Dendritic cell treated with granulocyte-macrophage colony-stimulating factor and Interleukin-4, amounts not matched to agents 40 ng/mL and 50 ng/mL, for 4 days (primary cell): ENCODE measurements at regions of chr2 and their contacts with region 1.

Region 1: DNA sequence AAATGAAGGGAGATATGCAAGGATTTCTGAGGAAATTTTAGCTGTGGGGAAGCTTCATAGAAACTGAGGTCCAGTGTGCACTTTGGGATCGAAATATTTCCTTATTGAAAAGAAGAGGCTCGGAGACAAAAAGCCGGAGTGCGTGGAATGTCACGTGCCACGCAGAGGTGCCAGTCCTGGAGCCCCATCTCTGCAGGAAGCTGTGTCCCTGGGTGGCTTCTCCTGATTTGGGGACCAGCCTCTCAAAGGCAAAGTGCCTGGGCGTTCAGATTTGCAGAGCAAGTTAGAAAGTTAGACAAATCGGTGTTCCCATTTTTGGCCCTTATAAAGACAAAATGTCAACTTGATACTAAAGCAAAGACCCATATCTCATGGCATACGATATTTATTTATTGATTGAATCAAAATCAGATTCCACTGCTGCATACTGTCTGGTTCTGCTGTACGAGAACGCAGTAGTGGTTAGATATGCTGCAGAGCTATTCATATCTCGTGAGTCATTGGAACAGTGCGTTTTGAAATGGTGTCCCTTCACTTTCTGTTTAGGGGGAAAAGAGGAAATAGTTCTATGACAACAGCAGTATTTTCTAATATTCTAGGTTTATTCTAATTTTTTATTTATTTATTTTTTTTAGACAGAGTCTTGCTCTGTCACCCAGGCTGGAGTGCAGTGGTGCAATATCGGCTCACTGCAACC is 9.1 kb upstream of the ATG16L1 start:
- H3K4me3 Mint-ChIP-seq: peak overlapping the region; percentile 6
- H3K27ac Mint-ChIP-seq: peak overlapping the region; percentile 69
- H3K4me1 Mint-ChIP-seq: peaks cover 43% of the 10 kb centered on the region
- H3K27me3 Mint-ChIP-seq: no peaks in the 10 kb centered on the region

Region 2: DNA sequence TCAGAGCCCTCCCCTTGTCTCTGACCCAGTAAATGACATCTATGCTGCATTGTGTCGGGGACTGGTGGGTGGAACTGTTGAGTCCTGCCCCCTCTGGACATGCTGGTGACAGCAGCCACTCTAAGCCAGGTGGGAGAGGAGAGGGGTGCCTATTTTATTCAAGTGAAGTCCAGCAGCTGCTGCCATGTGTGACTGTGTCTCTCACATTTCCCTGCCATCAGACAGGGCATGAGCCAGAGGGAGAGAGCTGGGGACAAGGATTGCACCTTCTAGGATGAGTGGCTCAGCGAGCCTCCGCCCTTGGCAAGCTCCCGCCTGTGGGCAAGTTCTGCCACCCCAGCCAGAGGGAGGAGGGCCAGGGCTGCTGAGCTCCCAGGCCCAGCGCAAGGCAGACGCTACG is 243.0 kb before region 1 on chr2:
- intact Hi-C with region 1: no loop called
- H3K4me3 Mint-ChIP-seq: no peak overlapping the region
- H3K27ac Mint-ChIP-seq: no peak overlapping the region
- H3K4me1 Mint-ChIP-seq: peaks cover 17% of the 10 kb centered on the region
- H3K27me3 Mint-ChIP-seq: peaks cover 18% of the 10 kb centered on the region

Region 3: GRCh38 chr2:233202531-233202944 is 39.8 kb before region 1 on chr2:
- intact Hi-C with region 1: loop called (anchors 5 kb)
- H3K4me3 Mint-ChIP-seq: peak overlapping the region; percentile 39
- H3K27ac Mint-ChIP-seq: peak overlapping the region; percentile 86
- H3K4me1 Mint-ChIP-seq: peaks cover 54% of the 10 kb centered on the region
- H3K27me3 Mint-ChIP-seq: no peaks in the 10 kb centered on the region

Region 4: DNA sequence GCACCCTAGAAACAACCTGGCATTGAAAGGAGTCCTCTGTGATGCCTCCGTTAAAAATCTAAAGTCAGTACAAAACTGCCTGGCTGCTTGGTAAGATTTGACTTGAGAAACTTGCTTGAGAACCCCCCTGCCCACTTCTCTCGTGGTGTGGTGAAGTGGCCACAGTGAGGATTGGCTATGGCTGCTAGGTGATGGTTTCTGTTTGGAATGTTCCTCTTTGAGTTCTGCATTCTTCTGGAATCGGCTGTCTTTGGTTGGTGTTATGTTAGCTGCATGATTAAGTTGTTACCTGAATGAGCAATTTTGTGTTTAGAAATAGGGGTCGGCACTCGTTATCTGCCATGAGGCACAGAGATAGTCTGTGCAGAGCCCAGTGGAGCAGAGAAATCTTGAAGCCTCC is 43.5 kb after region 1 on chr2:
- intact Hi-C with region 1: no loop called
- H3K4me3 Mint-ChIP-seq: no peak overlapping the region
- H3K27ac Mint-ChIP-seq: no peak overlapping the region
- H3K4me1 Mint-ChIP-seq: no peaks in the 10 kb centered on the region
- H3K27me3 Mint-ChIP-seq: no peaks in the 10 kb centered on the region

Region 5: DNA sequence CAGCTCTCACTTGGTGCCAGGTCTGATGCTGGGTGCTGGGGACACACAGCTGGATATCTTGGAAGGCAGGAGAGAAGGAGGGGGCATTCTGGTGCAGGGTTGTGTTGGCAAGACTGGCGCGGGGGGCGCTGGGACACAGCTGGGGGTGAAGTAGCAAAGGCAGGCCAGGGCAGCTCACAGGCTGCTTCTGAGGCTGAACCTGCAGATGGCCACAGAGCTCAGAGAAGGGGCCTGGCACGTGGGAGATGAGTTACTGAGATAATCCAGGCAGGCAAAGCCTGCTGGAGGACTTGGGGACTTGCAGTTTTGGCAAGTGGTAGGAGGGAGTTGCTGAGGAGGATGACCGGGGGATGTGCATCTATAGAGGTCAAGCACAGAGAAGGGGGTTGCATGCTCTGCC is 95.7 kb after region 1 on chr2:
- intact Hi-C with region 1: no loop called
- H3K4me3 Mint-ChIP-seq: no peak overlapping the region
- H3K27ac Mint-ChIP-seq: peak overlapping the region; percentile 6
- H3K4me1 Mint-ChIP-seq: peaks cover 36% of the 10 kb centered on the region
- H3K27me3 Mint-ChIP-seq: no peaks in the 10 kb centered on the region